Cardiac septum (tissue), 1 donor: ENCODE measurements at regions of chr5 and their contacts with region 1.

Region 1: GRCh38 chr5:14223372-14223771 is 80.2 kb downstream of the TRIO start:
- DNase-seq: no peak

Region 2: GRCh38 chr5:14258840-14259239 is 35.5 kb after region 1 on chr5:
- intact Hi-C with region 1: loop called (anchors 5 kb)
- DNase-seq: no peak

Region 3: DNA sequence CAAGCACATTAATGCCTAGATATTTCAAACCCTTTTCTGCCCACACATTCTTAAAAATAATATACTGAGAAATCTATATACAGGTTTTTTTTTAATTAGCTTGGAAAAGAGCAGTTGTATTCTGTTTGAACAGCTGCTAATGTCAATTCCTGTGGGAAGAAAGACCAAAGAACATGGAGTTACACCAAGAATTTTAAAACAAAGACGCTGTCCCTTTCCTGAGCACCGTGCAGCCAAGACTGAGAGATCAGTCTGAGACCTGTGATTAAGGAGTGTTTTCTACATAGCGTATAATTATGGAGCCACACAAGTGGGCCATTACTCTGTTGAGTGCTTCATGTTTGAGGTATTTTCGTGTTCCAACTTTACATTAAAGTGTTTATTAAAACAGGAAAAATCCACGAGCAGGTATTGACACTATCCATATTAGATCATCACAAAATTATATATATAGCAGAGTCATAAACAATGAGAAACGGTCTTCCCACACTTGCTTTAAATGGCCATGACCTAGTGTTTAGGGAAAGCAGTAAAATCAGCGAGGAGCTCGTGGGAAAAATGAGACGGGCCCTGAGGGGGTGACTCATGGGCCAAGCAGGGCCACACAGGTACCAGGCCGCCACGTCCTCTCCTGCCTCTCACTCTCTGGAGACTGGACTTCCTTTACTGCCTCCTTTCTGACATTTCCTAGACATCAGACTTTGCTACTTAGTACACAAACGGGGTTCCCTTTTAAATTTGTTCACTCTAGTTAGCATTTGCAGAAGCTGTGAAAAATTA is 205.1 kb after region 1 on chr5:
- intact Hi-C with region 1: no loop called
- DNase-seq: no peak

Region 4: GRCh38 chr5:14644623-14645237 is 421.4 kb after region 1 on chr5:
- intact Hi-C with region 1: no loop called
- DNase-seq: no peak